Mammary epithelial cell (primary cell): ENCODE measurements at regions of chr5 and their contacts with region 1.

Region 1: DNA sequence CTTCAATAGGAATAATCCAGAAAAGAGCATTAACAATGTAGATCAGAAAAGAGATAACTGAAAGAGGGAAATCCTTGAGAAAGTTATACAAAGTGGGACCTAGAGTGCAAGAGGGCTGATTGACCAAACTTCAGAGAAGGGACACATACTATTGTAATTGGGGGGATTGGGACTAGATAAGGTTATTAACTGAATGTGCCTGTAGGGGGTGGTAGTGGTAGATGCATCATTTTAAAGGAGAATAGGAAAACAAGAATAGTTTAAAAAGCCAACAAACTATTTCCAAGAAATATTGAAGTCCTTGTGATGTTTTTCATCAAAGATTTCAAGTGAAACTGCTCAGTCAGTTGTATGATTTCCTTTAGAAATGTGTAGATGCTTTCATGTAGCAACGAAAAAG is 468.5 kb downstream of the TAF11L14 start:
- DNase-seq: no peak
- H3K4me3 ChIP-seq: no peak overlapping the region
- H3K27ac ChIP-seq: no peak overlapping the region
- H3K4me1 ChIP-seq: no peaks in the 10 kb centered on the region
- H3K27me3 ChIP-seq: no peaks in the 10 kb centered on the region
- CTCF ChIP-seq: no peak

Region 2: GRCh38 chr5:17785774-17786173 is 317.0 kb before region 1 on chr5:
- CTCF ChIA-PET with region 1: no interaction called
- dilution Hi-C with region 1: no loop called
- in situ Hi-C with region 1: no loop called
- intact Hi-C with region 1: no loop called
- DNase-seq: no peak
- H3K4me3 ChIP-seq: no peak overlapping the region
- H3K27ac ChIP-seq: no peak overlapping the region
- H3K4me1 ChIP-seq: no peaks in the 10 kb centered on the region
- H3K27me3 ChIP-seq: no peaks in the 10 kb centered on the region
- CTCF ChIP-seq: no peak

Region 3: DNA sequence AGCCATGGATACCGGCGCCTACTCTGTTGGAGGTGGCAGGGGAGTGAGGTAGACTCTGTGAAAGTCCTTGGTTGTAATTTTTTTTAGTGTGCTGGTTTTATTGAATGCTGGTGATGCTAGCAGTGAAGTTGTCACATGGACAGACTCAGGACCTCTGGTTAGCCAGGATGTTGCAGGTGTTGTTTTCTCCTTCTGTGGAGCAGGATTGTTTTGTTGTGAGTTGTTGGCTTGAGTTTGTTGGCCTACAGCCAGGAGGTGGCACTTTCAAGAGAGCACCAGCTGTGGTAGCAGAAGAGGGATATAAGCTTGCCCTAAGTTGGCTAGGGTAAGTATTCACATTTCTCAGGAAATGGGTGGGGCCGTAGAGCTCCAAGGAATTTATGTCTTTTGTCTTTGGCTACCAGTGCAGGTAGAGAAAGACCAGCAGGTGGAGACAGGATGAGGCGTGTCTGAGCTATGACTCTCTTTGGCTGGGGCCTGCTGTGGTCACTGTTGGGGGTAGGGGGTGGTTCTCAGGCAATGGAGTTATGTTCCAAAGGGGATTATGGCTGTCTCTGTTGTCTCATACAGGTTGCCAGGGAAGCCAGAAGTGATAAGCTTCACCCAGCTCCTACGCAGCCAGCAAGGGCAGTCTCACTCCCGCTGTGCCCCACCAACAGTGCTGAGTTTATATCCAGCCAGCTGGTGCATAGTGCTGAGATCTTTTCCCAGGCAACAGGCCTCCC is 219.8 kb before region 1 on chr5:
- CTCF ChIA-PET with region 1: interaction called, 11 read pairs
- dilution Hi-C with region 1: no loop called
- in situ Hi-C with region 1: no loop called
- intact Hi-C with region 1: no loop called
- DNase-seq: peak; percentile 80
- H3K4me3 ChIP-seq: no peak overlapping the region
- H3K27ac ChIP-seq: peak overlapping the region; percentile 36
- H3K4me1 ChIP-seq: peaks cover 24% of the 10 kb centered on the region
- H3K27me3 ChIP-seq: no peaks in the 10 kb centered on the region
- CTCF ChIP-seq: peak; percentile 24 to 56

Region 4: GRCh38 chr5:18113721-18114120 is 11.0 kb after region 1 on chr5:
- CTCF ChIA-PET with region 1: interaction called, 22 read pairs
- dilution Hi-C with region 1: no loop called
- in situ Hi-C with region 1: no loop called
- intact Hi-C with region 1: no loop called
- DNase-seq: peak; percentile 8
- H3K4me3 ChIP-seq: no peak overlapping the region
- H3K27ac ChIP-seq: no peak overlapping the region
- H3K4me1 ChIP-seq: no peaks in the 10 kb centered on the region
- H3K27me3 ChIP-seq: no peaks in the 10 kb centered on the region
- CTCF ChIP-seq: peak in 1 of 2 donors; percentile 46

Region 5: DNA sequence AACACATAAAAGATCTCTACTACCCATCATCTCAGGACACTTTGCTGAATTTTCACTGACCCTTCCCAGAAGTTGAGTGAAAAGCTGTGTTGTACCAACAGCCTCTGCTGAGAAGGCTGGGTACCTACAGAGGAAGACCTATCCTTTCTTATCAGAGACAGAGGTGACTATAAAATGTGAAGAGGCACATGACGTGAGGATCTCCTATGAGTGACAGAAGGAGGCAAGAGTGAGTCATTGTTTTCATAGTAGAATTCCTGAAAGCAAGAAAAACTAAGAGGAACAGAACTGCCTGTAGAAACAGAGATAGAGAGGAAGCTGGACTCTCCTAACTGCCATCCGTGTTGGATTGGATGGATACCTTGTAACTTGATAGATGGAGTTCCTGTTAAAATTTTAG is 153.9 kb after region 1 on chr5:
- CTCF ChIA-PET with region 1: no interaction called
- dilution Hi-C with region 1: no loop called
- in situ Hi-C with region 1: no loop called
- intact Hi-C with region 1: no loop called
- DNase-seq: no peak
- H3K4me3 ChIP-seq: no peak overlapping the region
- H3K27ac ChIP-seq: no peak overlapping the region
- H3K4me1 ChIP-seq: no peaks in the 10 kb centered on the region
- H3K27me3 ChIP-seq: no peaks in the 10 kb centered on the region
- CTCF ChIP-seq: no peak

Region 6: GRCh38 chr5:18576342-18576741 is 473.6 kb after region 1 on chr5:
- CTCF ChIA-PET with region 1: no interaction called
- dilution Hi-C with region 1: no loop called
- in situ Hi-C with region 1: no loop called
- intact Hi-C with region 1: no loop called
- DNase-seq: no peak
- H3K4me3 ChIP-seq: no peak overlapping the region
- H3K27ac ChIP-seq: no peak overlapping the region
- H3K4me1 ChIP-seq: no peaks in the 10 kb centered on the region
- H3K27me3 ChIP-seq: no peaks in the 10 kb centered on the region
- CTCF ChIP-seq: no peak